CD8-positive, alpha-beta memory T cell (primary cell): ENCODE measurements at regions of chr9 and their contacts with region 1.

Region 1: GRCh38 chr9:136885950-136886578 is at the start of gene TRAF2:
- DNase-seq: peak; percentile 96 to 98 (median 96)
- H3K4me3 ChIP-seq: peak within 1 kb of the TSS; percentile 75
- H3K4me3 Mint-ChIP-seq: peak within 1 kb of the TSS; percentile 84 to 94 (median 86)
- H3K27ac ChIP-seq: peak within 1 kb of the TSS; percentile 79
- H3K27ac Mint-ChIP-seq: peak within 1 kb of the TSS; percentile 83 to 99 (median 95)
- H3K4me1 ChIP-seq: peaks cover 41% of the 10 kb centered on the region
- H3K4me1 Mint-ChIP-seq: peaks cover 26 to 64% (median 32%) of the 10 kb centered on the region in 3 donors
- H3K27me3 ChIP-seq: no peaks in the 10 kb centered on the region
- H3K27me3 Mint-ChIP-seq: no peaks in the 10 kb centered on the region
- total RNA-seq, gene TRAF2: 53.2 to 60.5 TPM

Region 2: DNA sequence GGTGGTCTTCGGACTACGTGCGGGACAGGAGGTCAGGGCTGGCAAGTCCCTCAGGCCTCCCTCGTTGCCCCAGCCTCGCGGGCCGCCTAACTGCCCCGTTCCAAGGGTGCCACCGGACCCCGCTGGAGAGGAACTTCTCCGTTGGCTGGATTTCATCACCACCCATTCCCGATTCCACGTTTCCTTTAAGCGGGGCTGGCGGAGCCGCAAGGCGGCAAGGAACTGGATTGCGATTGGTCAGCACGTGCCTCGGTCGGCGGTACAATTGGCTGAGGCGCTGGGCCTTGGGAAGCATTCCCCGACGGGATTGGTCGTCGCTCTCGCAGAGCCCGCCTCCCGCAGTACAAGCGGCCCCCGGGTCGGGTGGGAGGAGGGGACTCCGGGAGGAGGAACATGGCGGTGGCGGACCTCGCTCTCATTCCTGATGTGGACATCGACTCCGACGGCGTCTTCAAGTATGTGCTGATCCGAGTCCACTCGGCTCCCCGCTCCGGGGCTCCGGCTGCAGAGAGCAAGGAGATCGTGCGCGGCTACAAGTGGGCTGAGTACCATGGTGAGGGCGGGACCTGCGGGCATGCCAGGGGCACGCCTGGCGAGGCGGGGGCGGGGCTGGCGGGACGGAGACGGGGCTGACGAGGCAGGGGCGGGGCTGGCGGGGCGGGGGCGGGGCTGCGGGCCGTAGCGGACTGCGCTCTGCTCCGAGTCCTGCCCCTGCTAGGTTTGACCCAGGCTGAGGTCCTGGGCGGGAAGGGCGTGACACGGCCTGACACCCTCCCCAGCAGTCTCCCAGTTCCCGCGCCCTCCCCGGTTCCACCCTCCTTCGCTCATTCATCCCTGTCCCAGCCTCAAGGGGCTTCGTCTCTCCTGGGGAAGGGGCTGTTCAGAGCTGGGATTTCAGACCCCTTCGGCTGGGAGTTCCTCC is 36.8 kb before region 1 on chr9 and contains the start of gene PHPT1:
- CTCF ChIA-PET with region 1: interaction called, 23 read pairs
- POLR2A ChIA-PET with region 1: interaction called, 4 read pairs
- DNase-seq: peak; percentile 94 to 98 (median 96)
- H3K4me3 ChIP-seq: peak within 1 kb of the TSS; percentile 88
- H3K4me3 Mint-ChIP-seq: peak within 1 kb of the TSS; percentile 87 to 98 (median 90)
- H3K27ac ChIP-seq: peak within 1 kb of the TSS; percentile 81
- H3K27ac Mint-ChIP-seq: peak within 1 kb of the TSS; percentile 64 to 88 (median 84)
- H3K4me1 ChIP-seq: peaks cover 17% of the 10 kb centered on the region
- H3K4me1 Mint-ChIP-seq: peaks cover 0 to 27% (median 12%) of the 10 kb centered on the region in 3 donors
- H3K27me3 ChIP-seq: peaks cover 4% of the 10 kb centered on the region
- H3K27me3 Mint-ChIP-seq: peaks cover 8 to 21% of the 10 kb centered on the region in 2 donors
- total RNA-seq, gene PHPT1: 108 to 110 TPM

Region 3: DNA sequence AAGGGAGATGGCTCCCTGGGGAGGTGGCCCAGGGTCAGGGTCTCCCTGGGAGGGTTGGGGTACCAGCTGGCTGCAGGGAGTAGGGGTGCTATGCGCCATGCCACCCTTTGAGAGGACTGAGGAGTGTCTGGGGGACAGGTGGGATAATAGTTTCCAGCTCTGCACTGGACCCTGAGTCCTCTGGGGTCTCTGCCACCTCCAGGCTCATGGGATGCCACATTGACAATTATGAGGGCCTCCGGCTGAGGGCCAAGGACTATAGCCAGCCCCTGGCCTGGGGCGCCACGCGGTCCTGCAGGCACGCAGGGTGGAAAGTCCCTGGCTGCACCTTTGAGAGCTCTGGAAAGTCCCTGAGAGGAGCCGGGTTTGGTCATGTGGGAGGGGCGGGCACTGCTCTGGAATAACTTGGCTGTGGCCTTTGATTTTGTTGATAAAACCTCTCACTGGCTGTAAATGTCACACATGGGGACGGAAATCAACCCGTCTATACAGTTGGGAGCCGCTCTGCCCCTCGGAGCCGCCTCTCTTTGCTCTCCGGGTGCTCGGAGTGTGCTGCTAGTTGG is 16.3 kb after region 1 on chr9:
- CTCF ChIA-PET with region 1: interaction called, 3 read pairs
- POLR2A ChIA-PET with region 1: interaction called, 10 read pairs
- DNase-seq: peak; percentile 49 to 89 (median 78)
- H3K4me3 ChIP-seq: peak overlapping the region; percentile 59
- H3K4me3 Mint-ChIP-seq: peak overlapping the region; percentile 36 to 83 (median 75)
- H3K27ac ChIP-seq: peak overlapping the region; percentile 77
- H3K27ac Mint-ChIP-seq: peak overlapping the region; percentile 91 to 99 (median 97)
- H3K4me1 ChIP-seq: peaks cover 34% of the 10 kb centered on the region
- H3K4me1 Mint-ChIP-seq: peaks cover 27 to 53% (median 38%) of the 10 kb centered on the region in 3 donors
- H3K27me3 ChIP-seq: no peaks in the 10 kb centered on the region
- H3K27me3 Mint-ChIP-seq: no peaks in the 10 kb centered on the region